Activated T-helper 1 cell treated with anti-CD3 and anti-CD28 coated beads, Interleukin-12 subunit alpha, Interleukin-12 subunit beta, Interleukin-2, Interleukin-4 antibody, amounts not matched to agents 30 ng/mL and 10 ng/mL and 1 ng/mL, durations not matched to agents 14 hours and 24 hours and 36 hours (primary cell): ENCODE measurements at regions of chr19 and their contacts with region 1.

Region 1: GRCh38 chr19:29564574-29565005 is 38.8 kb downstream of the VSTM2B start:
- DNase-seq: no peak
- H3K4me3 Mint-ChIP-seq: no peak overlapping the region
- H3K27ac Mint-ChIP-seq: no peak overlapping the region
- H3K4me1 Mint-ChIP-seq: peaks cover 18% of the 10 kb centered on the region
- H3K27me3 Mint-ChIP-seq: peaks cover 18% of the 10 kb centered on the region

Region 2: DNA sequence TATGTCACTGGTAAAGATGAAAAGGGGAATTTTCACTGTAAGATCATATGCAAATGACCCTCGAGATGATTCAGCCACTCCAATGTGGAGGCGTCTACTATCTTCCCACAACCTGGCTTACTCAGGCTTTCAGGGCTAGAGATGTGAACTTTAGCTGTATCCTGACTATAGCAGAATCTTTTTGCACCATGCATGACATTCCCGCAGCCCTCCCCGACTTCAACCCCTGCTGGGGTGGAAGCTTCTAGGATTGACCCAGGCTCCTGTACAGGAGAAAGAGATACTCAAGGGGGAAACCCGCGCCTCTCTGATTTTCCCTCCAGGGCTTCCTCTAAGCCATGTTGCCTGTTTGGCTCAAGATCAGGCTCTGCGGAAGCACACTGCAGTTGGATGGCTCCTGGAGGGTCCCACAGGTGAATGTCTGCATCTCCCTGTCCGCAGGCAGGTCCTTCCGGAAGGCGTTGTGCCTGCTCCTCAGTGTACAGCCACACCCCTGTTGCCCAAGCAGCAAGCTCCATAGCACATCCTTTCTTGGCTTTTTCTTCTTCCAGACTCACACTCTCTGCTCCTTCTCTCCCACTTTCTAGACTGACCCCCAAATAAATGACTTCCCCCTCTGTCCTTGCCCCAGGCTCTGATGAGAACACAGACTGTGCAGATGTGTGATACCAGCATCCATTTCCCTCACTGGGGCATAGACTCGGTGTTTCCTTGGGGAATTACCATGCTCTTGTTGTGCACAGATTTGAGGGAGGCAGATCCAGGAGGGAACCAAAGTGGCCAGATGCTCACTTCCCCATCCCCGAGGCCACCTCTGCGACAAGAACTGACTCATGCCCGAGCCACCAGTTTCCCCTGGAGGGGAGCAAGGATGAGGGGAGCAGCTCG is 12.4 kb after region 1 on chr19:
- intact Hi-C with region 1: loop called (anchors 1 kb)
- DNase-seq: no peak
- H3K4me3 Mint-ChIP-seq: no peak overlapping the region
- H3K27ac Mint-ChIP-seq: no peak overlapping the region
- H3K4me1 Mint-ChIP-seq: peaks cover 29% of the 10 kb centered on the region
- H3K27me3 Mint-ChIP-seq: peaks cover 21% of the 10 kb centered on the region